Activated CD8-positive, alpha-beta memory T cell treated with anti-CD3 and anti-CD28 coated beads, Interleukin-2, amount 10 ng/mL, durations not matched to agents 7 days and 5 days (primary cell): ENCODE measurements at regions of chr4 and their contacts with region 1.

Region 1: GRCh38 chr4:183074296-183074990 is 24.6 kb upstream of the WWC2 start:
- DNase-seq: no peak
- ATAC-seq: no peak
- H3K4me3 Mint-ChIP-seq: no peak overlapping the region
- H3K27ac Mint-ChIP-seq: no peak overlapping the region
- H3K4me1 Mint-ChIP-seq: no peaks in the 10 kb centered on the region
- H3K27me3 Mint-ChIP-seq: peaks cover 27% of the 10 kb centered on the region

Region 2: DNA sequence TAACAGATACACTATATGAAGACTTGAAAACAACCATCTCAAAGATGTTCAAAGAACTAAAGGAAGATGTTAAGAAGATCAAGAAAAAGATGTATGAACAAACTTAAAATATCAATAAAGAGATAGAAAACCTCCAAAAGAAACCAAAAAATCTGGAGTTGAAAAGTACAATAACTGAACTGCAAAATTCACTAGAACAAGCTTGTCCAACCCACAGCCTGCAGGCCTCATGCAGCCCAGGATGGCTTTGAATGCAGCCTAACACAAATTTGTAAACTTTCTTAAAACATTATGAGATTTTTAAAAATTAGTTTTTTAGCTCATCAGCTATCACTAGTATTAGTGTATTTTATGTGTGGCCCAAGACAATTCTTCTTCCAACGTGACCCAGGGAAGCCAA is 80.3 kb before region 1 on chr4:
- CTCF ChIA-PET with region 1: no interaction called
- DNase-seq: no peak
- ATAC-seq: no peak
- H3K4me3 Mint-ChIP-seq: no peak overlapping the region
- H3K27ac Mint-ChIP-seq: no peak overlapping the region
- H3K4me1 Mint-ChIP-seq: no peaks in the 10 kb centered on the region
- H3K27me3 Mint-ChIP-seq: peaks cover 3% of the 10 kb centered on the region

Region 3: DNA sequence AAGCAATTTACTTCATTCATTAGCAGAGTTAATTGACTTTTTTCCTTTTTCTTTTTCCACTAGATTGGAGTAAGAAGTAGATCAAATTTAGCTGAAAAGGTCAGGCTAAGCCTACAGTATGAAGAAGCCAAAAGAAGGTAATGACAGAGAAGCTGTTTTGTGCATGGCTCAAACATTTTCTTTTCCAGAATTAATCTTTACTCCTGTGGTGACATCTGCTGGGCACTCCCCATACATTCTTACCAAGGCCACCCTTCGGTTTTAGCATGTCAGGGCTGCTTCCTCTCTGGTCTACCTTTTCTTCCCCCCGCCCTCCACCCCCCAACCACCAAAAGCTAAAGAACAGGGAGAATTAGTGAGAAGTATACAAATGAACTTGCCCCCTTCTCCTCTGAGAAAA is 175.4 kb after region 1 on chr4:
- CTCF ChIA-PET with region 1: interaction called, 13 read pairs
- DNase-seq: no peak
- ATAC-seq: no peak
- H3K4me3 Mint-ChIP-seq: no peak overlapping the region
- H3K27ac Mint-ChIP-seq: no peak overlapping the region
- H3K4me1 Mint-ChIP-seq: no peaks in the 10 kb centered on the region
- H3K27me3 Mint-ChIP-seq: peaks cover 30% of the 10 kb centered on the region

Region 4: GRCh38 chr4:183256756-183257385 is 182.4 kb after region 1 on chr4:
- CTCF ChIA-PET with region 1: interaction called, 60 read pairs
- DNase-seq: peak; percentile 47
- ATAC-seq: peak; percentile 67
- H3K4me3 Mint-ChIP-seq: no peak overlapping the region
- H3K27ac Mint-ChIP-seq: no peak overlapping the region
- H3K4me1 Mint-ChIP-seq: no peaks in the 10 kb centered on the region
- H3K27me3 Mint-ChIP-seq: peaks cover 30% of the 10 kb centered on the region